Heart right ventricle (tissue), 16 donors: ENCODE measurements at regions of chr12 and their contacts with region 1.

Region 1: DNA sequence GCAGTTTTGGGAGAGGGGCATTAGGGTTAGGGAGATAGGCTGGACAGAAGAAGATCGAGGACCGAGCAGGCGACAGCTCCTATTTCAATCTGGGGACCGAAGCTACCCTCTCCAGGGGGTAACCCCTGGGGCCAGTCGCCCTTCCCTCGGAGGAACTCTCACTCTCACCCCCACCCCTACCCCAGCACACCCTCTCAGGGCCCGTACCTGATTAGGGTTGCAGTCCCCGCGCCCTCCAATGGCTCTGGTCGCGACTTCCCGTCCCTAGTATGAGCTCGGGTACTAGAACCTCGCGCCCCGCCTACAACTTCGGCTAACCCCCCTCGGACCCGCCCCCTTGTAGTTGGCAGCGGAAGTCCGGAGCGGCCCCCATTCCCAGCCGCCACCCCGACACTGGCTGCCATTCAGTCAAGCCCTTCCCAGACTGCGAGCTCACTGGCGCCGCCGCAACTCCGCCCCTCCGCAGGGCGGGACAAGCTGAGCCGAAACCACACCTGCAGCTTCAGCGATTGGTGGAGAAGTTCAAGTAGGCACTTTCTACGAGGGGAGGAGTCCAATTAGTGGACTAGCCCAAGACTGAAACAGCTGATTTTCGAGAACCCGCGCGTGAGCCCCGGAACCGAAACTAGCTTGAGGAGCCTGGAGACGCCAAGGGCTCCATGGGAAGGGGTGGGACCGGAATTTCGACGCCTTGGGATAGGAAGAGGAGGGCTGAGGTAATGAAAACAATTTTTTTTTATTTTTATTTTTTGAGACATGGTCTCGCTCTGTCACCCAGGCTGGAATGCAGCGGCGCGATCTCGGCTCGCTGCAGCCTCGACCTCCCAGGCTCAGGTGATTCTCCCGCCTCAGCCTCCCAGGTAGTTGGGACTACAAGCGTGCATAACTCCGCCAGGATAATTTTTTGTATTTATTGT is at the start of gene STAT2:
- DNase-seq: peak; percentile 99
- ATAC-seq: peak; percentile 98 to 99 (median 99)
- H3K4me3 ChIP-seq: peak within 1 kb of the TSS; percentile 61 to 98 (median 84)
- H3K27ac ChIP-seq: peak within 1 kb of the TSS; percentile 65 to 95 (median 91)
- H3K4me1 ChIP-seq: peaks cover 0 to 39% (median 25%) of the 10 kb centered on the region in 9 donors
- H3K27me3 ChIP-seq: no peaks in the 10 kb centered on the region
- CTCF ChIP-seq: peak in 2 of 9 donors; percentile 11 to 21
- total RNA-seq, gene STAT2: 30.8 to 107 (median 38.7) TPM

Region 2: GRCh38 chr12:56315622-56316473 is 44.3 kb before region 1 on chr12 and contains the start of gene CNPY2:
- intact Hi-C with region 1: loop called in 1 of 10 experiments (anchors 5 kb)
- DNase-seq: peak; percentile 94 to 97
- ATAC-seq: peak; percentile 95 to 97 (median 96)
- H3K4me3 ChIP-seq: peak within 1 kb of the TSS; percentile 61 to 99 (median 94)
- H3K27ac ChIP-seq: peak within 1 kb of the TSS; percentile 88 to 98 (median 94)
- H3K4me1 ChIP-seq: peaks cover 7 to 23% (median 16%) of the 10 kb centered on the region in 9 donors
- H3K27me3 ChIP-seq: no peaks in the 10 kb centered on the region
- CTCF ChIP-seq: peak in 5 of 9 donors; percentile 7 to 38 (median 21)
- total RNA-seq, gene CNPY2: 22.3 to 51.0 (median 38.7) TPM

Region 3: DNA sequence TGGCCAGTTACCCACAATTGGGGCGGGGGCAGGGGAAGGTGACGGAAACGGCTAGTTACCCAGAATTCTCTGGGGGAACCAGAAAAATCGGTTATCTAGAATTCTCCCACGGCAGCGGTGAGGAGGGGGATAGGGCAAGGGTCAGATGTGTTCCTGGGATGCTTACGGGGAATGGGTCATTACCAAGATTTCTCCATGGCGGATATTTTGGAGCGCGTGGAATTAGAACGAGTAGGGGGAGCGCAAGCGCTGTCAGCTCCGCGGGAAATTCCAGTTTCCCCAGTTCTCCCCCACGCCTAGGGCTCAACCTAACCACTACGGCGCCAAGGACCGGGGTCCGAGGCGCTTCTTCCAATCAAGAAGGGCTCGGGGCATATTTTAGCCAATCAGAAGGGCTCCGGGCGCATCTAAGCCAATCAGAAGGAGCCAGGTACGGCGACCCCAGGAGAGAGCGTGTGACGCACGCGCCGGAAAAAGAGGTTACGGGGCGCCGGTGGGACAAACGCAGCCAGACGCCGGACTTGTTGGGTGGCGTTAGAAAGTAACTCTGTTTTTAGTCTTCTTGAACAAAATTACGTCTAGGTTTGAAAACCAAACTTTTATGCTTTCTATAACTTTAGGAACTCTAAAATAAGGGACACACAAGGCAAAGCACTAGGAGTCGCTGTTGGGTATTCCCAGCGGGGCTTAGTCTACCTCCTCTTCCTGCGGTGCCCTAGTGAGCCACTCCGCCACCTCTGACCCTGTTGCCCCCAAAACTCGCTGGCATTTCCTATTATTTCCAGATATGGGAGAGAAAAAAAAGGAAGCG is 26.2 kb before region 1 on chr12 and contains the start of gene PAN2:
- intact Hi-C with region 1: loop called in 1 of 10 experiments (anchors 2 kb)
- DNase-seq: peak; percentile 93 to 97
- ATAC-seq: peak; percentile 98 to 99 (median 99)
- H3K4me3 ChIP-seq: peak within 1 kb of the TSS; percentile 52 to 73 (median 61)
- H3K27ac ChIP-seq: peak within 1 kb of the TSS; percentile 84 to 97 (median 94)
- H3K4me1 ChIP-seq: peaks cover 6 to 35% (median 15%) of the 10 kb centered on the region in 9 donors
- H3K27me3 ChIP-seq: no peaks in the 10 kb centered on the region
- CTCF ChIP-seq: peak in 8 of 9 donors; percentile 29 to 74 (median 52)
- total RNA-seq, gene PAN2: 23.6 to 64.4 (median 38.1) TPM

Region 4: GRCh38 chr12:56448860-56449621 is 88.9 kb after region 1 on chr12 and contains the start of gene TIMELESS:
- intact Hi-C with region 1: loop called in 2 of 10 experiments (anchors 1 to 5 kb)
- DNase-seq: peak; percentile 86 to 90
- ATAC-seq: peak; percentile 98 to 99 (median 99)
- H3K4me3 ChIP-seq: peak within 1 kb of the TSS; percentile 52 to 83 (median 72)
- H3K27ac ChIP-seq: peak within 1 kb of the TSS; percentile 15 to 92 (median 86)
- H3K4me1 ChIP-seq: peaks cover 0 to 20% (median 11%) of the 10 kb centered on the region in 9 donors
- H3K27me3 ChIP-seq: no peaks in the 10 kb centered on the region
- CTCF ChIP-seq: peak in 2 of 9 donors; percentile 14 to 25
- total RNA-seq, gene TIMELESS: 1.0 to 5.2 (median 2.0) TPM